ENCODE measurements at regions of chr17 and their contacts with region 1.

Region 1: GRCh38 chr17:28065706-28066105 is 23.2 kb downstream of the NLK start:
- DNase-seq: no peak
- ATAC-seq: no peak
- H3K4me3 ChIP-seq: no peak overlapping the region
- H3K27ac ChIP-seq: no peak overlapping the region
- H3K4me1 ChIP-seq: no peaks in the 10 kb centered on the region
- H3K27me3 ChIP-seq: no peaks in the 10 kb centered on the region
- CTCF ChIP-seq: no peak

Region 2: GRCh38 chr17:28018439-28019070 is 47.2 kb before region 1 on chr17:
- CTCF ChIA-PET with region 1: no interaction called
- POLR2A ChIA-PET with region 1: no interaction called
- in situ Hi-C with region 1: no loop called
- intact Hi-C with region 1: loop called (anchors 5 kb)
- DNase-seq: no peak
- ATAC-seq: no peak
- H3K4me3 ChIP-seq: no peak overlapping the region
- H3K27ac ChIP-seq: no peak overlapping the region
- H3K4me1 ChIP-seq: no peaks in the 10 kb centered on the region
- H3K27me3 ChIP-seq: peaks cover 21% of the 10 kb centered on the region
- CTCF ChIP-seq: no peak

Region 3: GRCh38 chr17:28230011-28230410 is 164.3 kb after region 1 on chr17:
- CTCF ChIA-PET with region 1: no interaction called
- POLR2A ChIA-PET with region 1: no interaction called
- in situ Hi-C with region 1: no loop called
- intact Hi-C with region 1: no loop called
- DNase-seq: no peak
- ATAC-seq: no peak
- H3K4me3 ChIP-seq: no peak overlapping the region
- H3K27ac ChIP-seq: no peak overlapping the region
- H3K4me1 ChIP-seq: no peaks in the 10 kb centered on the region
- H3K27me3 ChIP-seq: peaks cover 3% of the 10 kb centered on the region; the same call in 1 of the 2 replicates
- CTCF ChIP-seq: no peak